Left ventricle myocardium superior (tissue), 1 donor: ENCODE measurements at regions of chr17 and their contacts with region 1.

Region 1: GRCh38 chr17:41052566-41052965 is 2.5 kb downstream of the KRTAP2-2 start:
- DNase-seq: no peak
- ATAC-seq: no peak

Region 2: DNA sequence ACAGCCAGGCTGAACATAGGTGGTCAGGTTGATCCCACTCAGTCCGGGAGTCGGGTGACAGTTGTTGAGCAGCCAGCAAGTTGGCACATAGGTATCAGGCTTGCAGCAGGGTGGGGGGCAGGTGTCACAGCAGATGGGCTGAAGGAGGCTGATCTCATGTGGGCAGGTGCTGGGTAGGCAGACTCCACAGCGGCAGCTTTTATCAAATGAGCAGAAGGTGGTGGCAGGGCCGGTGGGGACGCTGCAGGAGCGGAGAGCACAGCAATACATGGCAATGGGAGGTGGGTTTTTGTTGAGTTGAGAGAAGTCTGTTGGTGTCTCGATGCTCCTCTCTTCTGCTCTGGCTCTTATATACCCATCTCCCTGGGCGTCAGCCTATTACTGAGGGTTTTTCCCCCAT is 43.8 kb before region 1 on chr17 and contains the start of gene KRTAP3-1:
- intact Hi-C with region 1: loop called (anchors 5 kb)
- DNase-seq: no peak
- ATAC-seq: no peak
- total RNA-seq, gene KRTAP3-1: not detected